AG04450 (cell line): ENCODE measurements at regions of chr4 and their contacts with region 1.

Region 1: DNA sequence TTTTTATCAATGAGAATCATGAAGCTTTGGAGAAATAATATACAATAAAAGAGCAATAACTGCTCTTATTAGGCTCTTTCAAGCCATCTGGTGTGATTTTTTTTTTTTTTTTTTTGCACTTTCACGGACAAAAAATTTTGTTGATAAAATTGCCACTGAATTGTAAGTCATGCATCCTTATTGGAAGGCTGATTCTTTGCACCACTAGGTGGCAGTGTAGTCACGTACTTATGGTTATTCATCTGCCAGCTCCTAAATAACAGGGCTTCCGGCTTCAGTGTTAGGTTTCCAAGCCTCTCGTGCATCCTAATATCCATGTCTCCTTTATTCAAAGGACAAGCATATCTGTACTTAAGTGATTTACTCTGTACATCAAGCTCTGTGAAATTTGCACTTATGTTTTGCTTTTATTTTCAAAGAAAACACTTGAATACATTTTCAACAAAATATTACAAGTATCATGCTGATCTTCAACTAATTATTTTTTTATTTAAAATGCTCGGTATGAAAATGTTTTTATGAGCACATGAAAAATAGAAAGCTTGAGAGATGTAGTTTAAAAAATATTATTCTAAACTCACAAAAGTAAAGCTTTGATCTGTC is 1578.3 kb upstream of the TENM3 start:
- DNase-seq: peak; percentile 85
- H3K4me3 ChIP-seq: no peak overlapping the region
- H3K27ac ChIP-seq: no peak overlapping the region
- H3K27me3 ChIP-seq: no peaks in the 10 kb centered on the region
- CTCF ChIP-seq: peak; percentile 88

Region 2: DNA sequence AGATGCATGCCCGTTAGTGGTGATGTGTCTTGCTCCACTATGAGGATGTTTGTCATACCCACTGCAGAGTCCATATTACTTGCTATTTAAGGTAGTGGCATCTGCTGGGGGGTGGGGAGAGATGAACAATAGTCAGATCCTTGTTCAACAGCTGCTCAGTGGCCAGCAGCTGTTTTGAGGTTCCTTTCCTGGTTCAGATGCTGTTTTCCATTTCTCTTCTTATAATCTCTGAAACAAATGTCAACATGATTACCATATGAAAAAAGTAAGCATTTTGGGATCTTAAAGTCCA is 10.4 kb after region 1 on chr4:
- CTCF ChIA-PET with region 1: interaction called, 31 read pairs
- POLR2A ChIA-PET with region 1: no interaction called
- DNase-seq: no peak
- H3K4me3 ChIP-seq: no peak overlapping the region
- H3K27ac ChIP-seq: no peak overlapping the region
- H3K27me3 ChIP-seq: no peaks in the 10 kb centered on the region
- CTCF ChIP-seq: no peak

Region 3: DNA sequence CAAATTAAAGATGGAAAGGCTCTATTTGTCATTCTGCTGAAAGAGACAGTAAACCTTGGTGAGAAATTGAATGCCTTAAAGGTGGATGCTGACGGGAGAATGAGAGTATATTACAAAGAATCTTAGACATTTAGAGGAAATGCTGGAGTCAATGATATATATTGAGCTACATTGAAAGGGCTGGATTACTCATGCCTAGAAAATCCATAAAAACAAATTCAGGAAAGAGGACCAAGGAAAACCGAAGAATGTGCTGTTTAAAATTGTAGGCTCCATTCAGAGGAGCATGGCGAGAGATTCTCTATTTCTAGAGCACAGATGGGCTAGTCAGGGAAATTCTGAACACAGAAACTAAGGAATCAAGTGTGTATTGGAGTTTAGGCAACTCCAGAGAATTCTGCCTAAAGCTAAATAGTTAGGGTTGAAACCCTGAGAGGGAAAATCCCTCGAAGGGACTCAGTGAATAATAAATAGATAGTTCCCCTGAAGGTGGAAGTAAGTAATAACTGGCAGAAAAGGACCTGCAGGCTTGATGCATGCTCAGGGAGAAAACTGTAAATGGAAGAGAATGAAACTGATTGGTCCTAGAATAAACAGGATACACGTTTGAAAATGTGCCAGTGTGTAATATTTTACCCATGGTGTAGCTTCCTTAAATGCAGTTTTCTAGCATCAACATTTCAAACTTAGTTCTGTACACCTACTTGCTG is 45.9 kb after region 1 on chr4:
- CTCF ChIA-PET with region 1: interaction called, 21 read pairs
- POLR2A ChIA-PET with region 1: no interaction called
- DNase-seq: peak; percentile 13
- H3K4me3 ChIP-seq: peak overlapping the region; percentile 18
- H3K27ac ChIP-seq: no peak overlapping the region
- H3K27me3 ChIP-seq: no peaks in the 10 kb centered on the region
- CTCF ChIP-seq: no peak

Region 4: DNA sequence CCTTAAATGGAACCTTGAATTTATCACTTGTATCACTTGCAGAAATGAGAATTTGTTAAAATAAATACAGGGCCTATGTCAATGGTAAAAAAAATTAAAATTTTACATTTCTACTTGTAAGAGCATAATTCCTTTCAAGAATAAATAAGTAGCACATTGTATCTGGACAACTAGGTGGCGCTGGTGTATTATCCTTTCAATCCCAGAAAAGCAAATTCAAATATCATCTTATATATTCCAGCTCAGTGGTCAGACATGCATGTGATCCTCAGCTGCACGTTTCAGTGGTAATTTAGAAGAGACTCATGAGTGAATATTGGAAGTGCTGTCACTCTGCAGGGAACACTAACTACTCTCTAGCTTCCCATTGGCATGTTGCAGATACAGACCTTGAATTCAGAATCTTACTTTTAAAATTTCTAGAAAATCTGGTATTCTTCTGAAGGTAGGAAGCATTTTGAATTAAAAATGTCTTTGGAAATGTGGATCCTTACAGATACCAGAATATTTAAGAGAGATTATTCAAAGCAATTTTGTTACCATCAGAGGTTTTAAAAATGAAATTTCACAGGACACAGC is 163.7 kb after region 1 on chr4:
- CTCF ChIA-PET with region 1: interaction called, 65 read pairs
- POLR2A ChIA-PET with region 1: no interaction called
- DNase-seq: peak; percentile 51
- H3K4me3 ChIP-seq: no peak overlapping the region
- H3K27ac ChIP-seq: no peak overlapping the region
- H3K27me3 ChIP-seq: no peaks in the 10 kb centered on the region
- CTCF ChIP-seq: peak; percentile 84

Region 5: GRCh38 chr4:180947425-180947824 is 282.6 kb after region 1 on chr4:
- CTCF ChIA-PET with region 1: interaction called, 56 read pairs
- POLR2A ChIA-PET with region 1: no interaction called
- DNase-seq: no peak
- H3K4me3 ChIP-seq: no peak overlapping the region
- H3K27ac ChIP-seq: no peak overlapping the region
- H3K27me3 ChIP-seq: no peaks in the 10 kb centered on the region
- CTCF ChIP-seq: peak; percentile 55

Region 6: DNA sequence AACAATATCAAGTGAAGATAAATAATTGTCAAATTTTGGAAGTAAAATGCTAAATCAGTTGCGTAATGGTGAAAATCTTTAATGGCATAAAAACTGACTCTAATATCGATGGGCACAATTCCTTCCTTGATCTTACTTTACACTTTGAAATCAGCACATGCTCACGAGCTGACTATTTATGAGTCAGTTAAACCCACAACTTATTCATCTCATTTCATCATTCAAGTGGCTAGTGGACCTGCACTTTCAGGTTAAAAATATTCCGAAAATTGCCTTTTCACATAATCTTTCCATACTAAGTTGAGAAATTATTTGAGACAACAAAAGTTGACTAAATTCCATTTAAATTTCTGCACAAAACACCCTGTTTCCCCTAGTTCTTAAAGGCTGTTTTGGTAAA is 996.2 kb after region 1 on chr4:
- CTCF ChIA-PET with region 1: no interaction called
- POLR2A ChIA-PET with region 1: no interaction called
- DNase-seq: peak; percentile 46
- H3K4me3 ChIP-seq: no peak overlapping the region
- H3K27ac ChIP-seq: no peak overlapping the region
- H3K27me3 ChIP-seq: no peaks in the 10 kb centered on the region
- CTCF ChIP-seq: no peak